ENCODE measurements at regions of chr3 and their contacts with region 1.

Region 1: DNA sequence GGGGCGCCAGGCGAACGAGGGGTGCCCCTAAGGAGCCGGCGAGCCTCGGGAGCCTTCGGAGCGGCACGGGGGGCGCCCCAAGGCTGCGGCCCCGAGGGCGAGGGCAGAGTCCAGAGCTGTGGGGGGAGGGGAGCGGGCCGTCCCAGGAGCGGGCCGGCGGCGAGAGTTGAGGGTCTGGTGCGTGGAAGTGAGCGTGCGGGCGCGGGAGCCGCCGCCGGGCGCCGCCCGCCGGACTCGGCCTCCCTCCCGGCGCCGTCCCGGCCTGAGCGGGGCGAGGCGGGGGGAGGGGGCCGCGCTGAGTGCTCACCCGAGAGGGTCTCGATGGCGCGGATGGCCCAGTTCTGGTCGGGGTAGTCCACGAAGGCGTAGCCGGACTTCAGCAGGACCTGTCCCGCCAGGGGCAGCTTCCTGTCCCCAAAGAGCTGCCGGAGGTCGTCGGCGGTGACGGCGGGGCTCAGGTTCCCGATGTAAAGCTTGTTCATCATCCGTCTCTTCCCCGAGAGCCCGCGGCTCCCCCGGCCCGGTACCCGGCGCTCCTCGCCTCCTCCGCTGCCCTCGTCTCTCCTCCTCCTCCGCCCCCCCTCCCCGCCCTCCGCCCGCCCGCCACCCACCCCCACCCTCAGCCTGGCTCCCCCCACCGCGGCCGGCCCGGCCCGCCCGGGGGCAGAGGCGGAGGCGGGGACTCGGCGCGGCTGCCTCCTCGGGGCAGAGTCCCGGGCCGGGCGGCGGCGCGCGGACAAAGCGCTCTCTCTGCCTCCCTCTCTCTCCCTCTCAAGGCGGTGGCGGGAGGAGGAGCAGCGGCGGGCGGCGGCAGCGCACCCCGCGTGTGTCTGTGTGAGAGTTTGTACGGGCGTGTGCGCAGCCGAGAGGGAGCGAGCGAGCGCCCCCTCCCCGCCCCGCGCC is at the start of gene IGF2BP2:
- DNase-seq: peak; percentile 81 to 83
- H3K4me3 ChIP-seq: peak within 1 kb of the TSS; percentile 69 to 91 (median 86)
- H3K27ac ChIP-seq: peak within 1 kb of the TSS; percentile 81 to 89 (median 81)
- H3K4me1 ChIP-seq: peaks cover 0 to 3% of the 10 kb centered on the region in 2 donors
- H3K27me3 ChIP-seq: no peaks in the 10 kb centered on the region
- CTCF ChIP-seq: peak in 3 of 6 experiments; percentile 25 to 40 (median 35)
- POLR2A ChIP-seq: peak in 1 of 2 donors; percentile 82
- total RNA-seq, gene IGF2BP2: 12.4 to 45.7 (median 15.9) TPM

Region 2: DNA sequence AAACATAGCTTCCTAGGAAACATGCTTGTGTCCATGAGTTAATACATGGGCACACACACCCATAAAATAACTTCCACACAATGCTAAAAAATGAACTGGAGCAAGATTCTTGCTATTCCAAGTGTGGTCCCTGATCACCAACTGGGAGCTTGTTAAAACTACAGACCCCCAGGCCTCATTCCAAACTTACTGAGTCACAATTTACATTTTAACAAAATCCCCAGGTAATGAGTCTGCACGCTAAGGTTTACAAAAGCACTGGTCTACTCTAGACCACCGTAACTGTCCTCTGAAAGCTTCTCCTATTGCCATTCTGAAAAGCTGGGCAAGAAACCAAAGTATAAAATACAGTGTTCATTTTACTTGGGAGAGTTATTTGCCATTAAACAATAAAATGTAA is 45.3 kb before region 1 on chr3:
- intact Hi-C with region 1: loop called (anchors 10 kb)
- DNase-seq: no peak
- H3K4me3 ChIP-seq: no peak overlapping the region
- H3K27ac ChIP-seq: no peak overlapping the region
- H3K4me1 ChIP-seq: no peaks in the 10 kb centered on the region
- H3K27me3 ChIP-seq: no peaks in the 10 kb centered on the region
- CTCF ChIP-seq: no peak
- POLR2A ChIP-seq: no peak

Region 3: GRCh38 chr3:185937689-185938463 is 113.1 kb after region 1 on chr3 and contains the start of gene TRA2B:
- intact Hi-C with region 1: loop called (anchors 10 kb)
- DNase-seq: peak; percentile 99
- H3K4me3 ChIP-seq: peak within 1 kb of the TSS; percentile 78 to 95 (median 95)
- H3K27ac ChIP-seq: peak within 1 kb of the TSS; percentile 100
- H3K4me1 ChIP-seq: peaks cover 3 to 9% of the 10 kb centered on the region in 2 donors
- H3K27me3 ChIP-seq: no peaks in the 10 kb centered on the region
- CTCF ChIP-seq: peak in 4 of 6 experiments; percentile 9 to 35 (median 12)
- POLR2A ChIP-seq: peak; percentile 100
- total RNA-seq, gene TRA2B: 162 to 237 (median 202) TPM

Measured in thyroid gland (tissue), 4 donors.